ENCODE measurements at regions of chr12 and their contacts with region 1.

Region 1: GRCh38 chr12:114662512-114663177 is 21.3 kb downstream of the TBX3 start:
- DNase-seq: peak; percentile 74 to 77
- H3K4me3 ChIP-seq: no peak overlapping the region
- H3K27ac ChIP-seq: no peak overlapping the region
- H3K4me1 ChIP-seq: peaks cover 0 to 5% (median 0%) of the 10 kb centered on the region in 4 donors
- H3K27me3 ChIP-seq: peaks cover 0 to 68% of the 10 kb centered on the region in 2 donors
- CTCF ChIP-seq: peak; percentile 89 to 94

Region 2: GRCh38 chr12:114588091-114588490 is 74.6 kb before region 1 on chr12:
- intact Hi-C with region 1: no loop called
- DNase-seq: no peak
- H3K4me3 ChIP-seq: no peak overlapping the region
- H3K27ac ChIP-seq: no peak overlapping the region
- H3K4me1 ChIP-seq: no peaks in the 10 kb centered on the region
- H3K27me3 ChIP-seq: no peaks in the 10 kb centered on the region
- CTCF ChIP-seq: no peak

Region 3: GRCh38 chr12:115752913-115753726 is 1090.5 kb after region 1 on chr12:
- intact Hi-C with region 1: loop called (anchors 2 kb)
- DNase-seq: peak in 1 of 2 donors; percentile 22
- H3K4me3 ChIP-seq: no peak overlapping the region
- H3K27ac ChIP-seq: no peak overlapping the region
- H3K4me1 ChIP-seq: no peaks in the 10 kb centered on the region
- H3K27me3 ChIP-seq: peaks cover 0 to 9% of the 10 kb centered on the region in 2 donors
- CTCF ChIP-seq: peak; percentile 63 to 80

Region 4: DNA sequence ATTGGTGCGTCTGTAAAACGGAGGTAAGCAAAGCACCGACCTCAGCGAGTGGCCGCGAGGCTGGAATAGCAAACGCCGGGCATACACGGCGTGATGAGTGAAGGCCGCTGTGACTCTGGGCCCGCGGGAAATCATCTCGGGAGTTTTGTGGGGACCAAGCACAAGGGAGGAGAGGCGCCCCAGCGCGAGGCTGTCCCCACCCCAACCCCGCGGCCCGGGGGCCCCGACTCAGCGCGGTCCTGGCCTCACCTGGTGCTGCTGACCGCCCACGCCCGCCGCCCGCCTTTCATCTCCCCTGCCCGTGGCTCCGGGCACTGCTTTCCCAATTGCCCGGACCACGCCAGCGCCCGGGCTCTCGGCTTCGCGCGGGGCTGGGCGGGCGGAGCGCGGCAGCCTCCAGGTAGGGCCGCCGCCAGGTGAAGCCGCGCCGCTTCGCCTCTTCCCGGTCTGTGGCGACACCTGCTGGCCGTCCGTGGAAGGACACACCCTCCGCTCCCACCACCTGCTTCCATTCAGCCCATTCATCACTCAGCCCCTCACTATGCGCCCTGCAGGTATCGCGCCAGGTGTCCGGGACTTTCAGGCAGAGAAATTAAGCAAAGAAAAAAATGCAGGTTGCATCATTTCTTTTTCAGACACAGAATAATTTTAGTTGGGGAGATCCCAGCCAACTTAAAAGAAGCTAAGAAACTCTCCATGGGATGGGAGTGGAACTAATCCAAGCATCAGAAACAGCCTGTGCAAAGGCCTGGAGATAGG is 1254.4 kb after region 1 on chr12:
- intact Hi-C with region 1: loop called (anchors 5 kb)
- DNase-seq: peak; percentile 45 to 70
- H3K4me3 ChIP-seq: no peak overlapping the region
- H3K27ac ChIP-seq: no peak overlapping the region
- H3K4me1 ChIP-seq: peaks cover 0 to 7% (median 2%) of the 10 kb centered on the region in 4 donors
- H3K27me3 ChIP-seq: peaks cover 0 to 52% of the 10 kb centered on the region in 2 donors
- CTCF ChIP-seq: peak; percentile 94 to 95

Measured in tibial artery (tissue), 4 donors.